ENCODE measurements at regions of chr15 and their contacts with region 1.

Region 1: GRCh38 chr15:57861036-57861638 is 154.6 kb downstream of the POLR2M start:
- DNase-seq: peak; percentile 40
- ATAC-seq: no peak
- H3K4me3 Mint-ChIP-seq: no peak overlapping the region
- H3K27ac Mint-ChIP-seq: no peak overlapping the region
- H3K4me1 Mint-ChIP-seq: peaks cover 3% of the 10 kb centered on the region
- H3K27me3 Mint-ChIP-seq: peaks cover 8% of the 10 kb centered on the region

Region 2: DNA sequence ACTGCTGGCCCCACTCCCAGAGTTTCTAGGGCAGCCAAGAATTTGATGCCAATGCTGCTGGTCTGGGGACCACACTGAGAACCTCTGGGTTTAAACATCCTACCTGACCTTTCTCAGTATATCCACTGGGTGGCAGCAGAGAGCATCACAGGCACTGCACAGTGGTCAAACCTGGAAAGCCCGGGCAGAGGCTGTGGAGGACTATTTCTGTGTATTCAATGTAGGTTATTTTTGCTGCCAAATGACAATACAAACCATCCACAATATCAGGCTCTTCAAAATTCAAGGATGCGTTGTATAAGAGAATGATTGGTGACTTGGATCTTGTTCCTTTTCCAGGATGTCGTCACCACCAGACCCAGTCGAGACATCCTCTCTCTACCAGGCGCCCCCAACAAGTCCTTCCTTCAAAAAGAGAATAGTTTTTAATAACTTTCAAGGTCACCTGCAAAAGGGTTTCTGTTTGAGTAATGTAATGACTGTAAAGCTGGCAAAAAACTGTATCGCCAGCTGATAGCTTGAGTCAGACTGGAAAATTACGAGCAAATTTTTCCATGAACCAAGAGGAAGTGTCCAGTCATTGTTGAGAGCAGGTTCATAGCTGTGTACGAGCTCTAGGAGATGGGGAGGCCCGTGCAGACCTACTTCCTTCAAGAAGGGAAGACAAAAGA is 300.0 kb before region 1 on chr15:
- CTCF ChIA-PET with region 1: interaction called, 22 read pairs
- POLR2A ChIA-PET with region 1: no interaction called
- intact Hi-C with region 1: loop called (anchors 1 to 2 kb)
- DNase-seq: peak; percentile 74
- ATAC-seq: peak; percentile 83
- H3K4me3 Mint-ChIP-seq: peak overlapping the region; percentile 17
- H3K27ac Mint-ChIP-seq: peak overlapping the region; percentile 89
- H3K4me1 Mint-ChIP-seq: peaks cover 37% of the 10 kb centered on the region
- H3K27me3 Mint-ChIP-seq: no peaks in the 10 kb centered on the region

Region 3: DNA sequence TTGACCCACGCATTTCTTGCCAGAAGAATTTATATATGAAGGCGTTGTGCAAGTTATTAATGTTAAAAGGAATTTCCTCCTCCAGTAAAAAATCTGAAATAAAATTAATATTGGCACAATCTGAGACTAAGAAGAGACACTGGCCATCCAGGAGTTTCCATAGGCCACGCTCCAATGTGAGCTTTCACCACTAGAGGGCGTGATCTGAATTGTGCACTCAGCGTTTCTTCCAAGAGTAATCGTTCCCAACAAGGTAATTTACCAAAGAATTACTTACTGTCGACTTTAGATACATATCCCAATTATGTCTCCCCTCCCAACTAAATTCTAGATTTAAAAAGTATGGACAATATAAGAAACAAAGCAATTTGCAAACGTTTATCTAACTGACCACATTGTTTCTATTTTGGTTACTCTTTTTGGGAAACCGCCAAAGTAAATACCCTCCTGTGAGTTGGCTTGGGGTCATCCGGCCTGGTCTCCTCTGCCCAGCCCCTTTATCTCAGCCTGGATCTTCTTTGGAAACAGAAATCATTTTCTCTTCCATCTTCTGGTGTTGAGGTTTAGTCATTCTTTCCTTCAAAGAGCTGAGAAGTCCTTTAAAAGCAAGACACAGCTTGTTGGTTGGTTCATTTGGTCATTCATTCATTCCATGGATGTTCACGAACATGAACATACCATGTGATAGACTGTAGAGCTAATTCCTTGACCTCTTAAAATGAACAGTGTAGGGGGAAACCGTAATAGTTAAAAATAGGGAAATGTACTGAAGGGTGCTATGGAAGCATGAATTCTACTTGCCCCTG is 128.4 kb before region 1 on chr15:
- CTCF ChIA-PET with region 1: interaction called, 36 read pairs
- POLR2A ChIA-PET with region 1: no interaction called
- intact Hi-C with region 1: loop called (anchors 1 to 2 kb)
- DNase-seq: peak; percentile 69
- ATAC-seq: peak; percentile 36
- H3K4me3 Mint-ChIP-seq: no peak overlapping the region
- H3K27ac Mint-ChIP-seq: no peak overlapping the region
- H3K4me1 Mint-ChIP-seq: peaks cover 9% of the 10 kb centered on the region
- H3K27me3 Mint-ChIP-seq: no peaks in the 10 kb centered on the region

Region 4: DNA sequence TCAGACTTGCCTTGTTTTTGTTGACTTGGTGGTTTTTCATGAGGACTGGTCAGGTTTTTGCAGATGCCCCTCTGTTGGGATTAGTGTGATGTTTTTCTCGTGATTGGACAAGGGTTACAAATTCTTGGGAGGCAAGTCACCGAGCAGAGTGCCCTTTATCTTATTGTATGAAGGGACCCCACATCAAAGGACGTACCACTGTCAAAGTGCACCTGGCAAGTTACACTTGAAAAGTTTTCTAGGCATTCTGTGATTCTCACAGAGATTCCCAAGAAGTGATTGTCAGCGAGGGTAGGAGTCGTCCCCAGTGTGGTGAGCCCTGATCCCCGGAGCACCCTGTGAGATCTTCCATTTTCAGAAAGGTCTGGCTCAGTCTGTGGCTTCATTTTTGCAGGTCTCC is 44.5 kb before region 1 on chr15:
- CTCF ChIA-PET with region 1: no interaction called
- POLR2A ChIA-PET with region 1: no interaction called
- intact Hi-C with region 1: loop called in 1 of 2 experiments (anchors 2 kb)
- DNase-seq: no peak
- ATAC-seq: no peak
- H3K4me3 Mint-ChIP-seq: no peak overlapping the region
- H3K27ac Mint-ChIP-seq: no peak overlapping the region
- H3K4me1 Mint-ChIP-seq: no peaks in the 10 kb centered on the region
- H3K27me3 Mint-ChIP-seq: peaks cover 21% of the 10 kb centered on the region

Region 5: DNA sequence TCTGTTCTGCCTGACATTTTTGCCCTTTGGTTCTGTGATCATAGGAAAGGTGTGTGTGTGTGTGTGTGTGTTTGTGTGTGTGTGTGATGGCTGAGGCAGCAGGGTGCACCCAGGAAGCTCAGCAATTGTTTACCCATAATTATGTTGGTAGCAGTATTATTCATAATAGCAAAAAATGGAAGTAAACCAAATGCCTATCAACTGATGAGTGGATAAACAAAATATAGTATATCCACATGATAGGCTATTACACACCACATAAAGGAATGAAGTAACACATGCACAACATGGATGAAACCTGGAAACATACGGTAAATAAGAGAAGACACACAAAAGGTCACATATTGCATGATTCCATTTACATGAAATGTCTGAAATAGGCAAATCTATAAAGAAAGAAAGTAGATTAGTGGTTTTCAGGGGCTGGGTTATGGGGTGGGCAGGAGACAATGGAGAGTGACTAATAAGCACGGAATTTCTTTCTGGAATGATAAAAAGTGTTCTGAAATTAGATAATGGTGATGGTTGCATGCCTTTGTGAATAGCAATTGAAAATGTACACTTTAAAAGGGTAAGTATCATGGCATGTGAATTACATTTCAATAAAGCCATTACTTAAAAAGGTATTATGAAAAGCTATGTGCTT is 12.6 kb after region 1 on chr15:
- CTCF ChIA-PET with region 1: interaction called, 38 read pairs
- POLR2A ChIA-PET with region 1: no interaction called
- intact Hi-C with region 1: no loop called
- DNase-seq: no peak
- ATAC-seq: no peak
- H3K4me3 Mint-ChIP-seq: no peak overlapping the region
- H3K27ac Mint-ChIP-seq: no peak overlapping the region
- H3K4me1 Mint-ChIP-seq: no peaks in the 10 kb centered on the region
- H3K27me3 Mint-ChIP-seq: peaks cover 30% of the 10 kb centered on the region

Measured in activated CD4-positive, alpha-beta T cell treated with anti-CD3 and anti-CD28 coated beads for 36 hours (primary cell).